CD4-positive, alpha-beta memory T cell (primary cell): ENCODE measurements at regions of chr11 and their contacts with region 1.

Region 1: GRCh38 chr11:63530021-63530420 is 6.6 kb upstream of the PLAAT4 start:
- DNase-seq: no peak
- H3K4me3 ChIP-seq: no peak overlapping the region
- H3K4me3 Mint-ChIP-seq: peak overlapping the region in 1 of 8 donors; percentile 26
- H3K27ac ChIP-seq: no peak overlapping the region
- H3K27ac Mint-ChIP-seq: peak overlapping the region; percentile 67 to 94 (median 85)
- H3K4me1 ChIP-seq: peaks cover 56% of the 10 kb centered on the region
- H3K4me1 Mint-ChIP-seq: peaks cover 43 to 59% (median 52%) of the 10 kb centered on the region in 4 donors
- H3K27me3 ChIP-seq: no peaks in the 10 kb centered on the region
- H3K27me3 Mint-ChIP-seq: no peaks in the 10 kb centered on the region

Region 2: GRCh38 chr11:63490551-63491239 is 39.3 kb before region 1 on chr11 and contains the start of gene PLAAT5:
- CTCF ChIA-PET with region 1: interaction called, 3 read pairs
- POLR2A ChIA-PET with region 1: interaction called, 4 read pairs
- intact Hi-C with region 1: loop called (anchors 2 kb)
- DNase-seq: peak in 3 of 5 donors; percentile 9 to 16 (median 16)
- H3K4me3 ChIP-seq: peak within 1 kb of the TSS in 1 of 2 donors; percentile 18
- H3K4me3 Mint-ChIP-seq: peak within 1 kb of the TSS; percentile 80 to 93 (median 86)
- H3K27ac ChIP-seq: no peak within 1 kb of the TSS
- H3K27ac Mint-ChIP-seq: peak within 1 kb of the TSS; percentile 32 to 89 (median 58)
- H3K4me1 ChIP-seq: peaks cover 13% of the 10 kb centered on the region
- H3K4me1 Mint-ChIP-seq: peaks cover 13 to 26% (median 17%) of the 10 kb centered on the region in 4 donors
- H3K27me3 ChIP-seq: no peaks in the 10 kb centered on the region
- H3K27me3 Mint-ChIP-seq: peaks cover 5 to 10% of the 10 kb centered on the region in 2 donors
- total RNA-seq, gene PLAAT5: not detected